ENCODE measurements at regions of chr15 and their contacts with region 1.

Region 1: GRCh38 chr15:29747837-29748417 is 74.3 kb downstream of the TJP1 start:
- DNase-seq: no peak
- H3K4me3 ChIP-seq: no peak overlapping the region
- H3K27ac ChIP-seq: no peak overlapping the region
- H3K4me1 ChIP-seq: no peaks in the 10 kb centered on the region
- H3K27me3 ChIP-seq: no peaks in the 10 kb centered on the region
- CTCF ChIP-seq: peak; percentile 13 to 53 (median 43)

Region 2: GRCh38 chr15:29613951-29614382 is 134.0 kb before region 1 on chr15:
- intact Hi-C with region 1: no loop called
- DNase-seq: no peak
- H3K4me3 ChIP-seq: no peak overlapping the region
- H3K27ac ChIP-seq: no peak overlapping the region
- H3K4me1 ChIP-seq: peaks cover 3 to 7% of the 10 kb centered on the region in 2 donors
- H3K27me3 ChIP-seq: no peaks in the 10 kb centered on the region
- CTCF ChIP-seq: no peak

Region 3: DNA sequence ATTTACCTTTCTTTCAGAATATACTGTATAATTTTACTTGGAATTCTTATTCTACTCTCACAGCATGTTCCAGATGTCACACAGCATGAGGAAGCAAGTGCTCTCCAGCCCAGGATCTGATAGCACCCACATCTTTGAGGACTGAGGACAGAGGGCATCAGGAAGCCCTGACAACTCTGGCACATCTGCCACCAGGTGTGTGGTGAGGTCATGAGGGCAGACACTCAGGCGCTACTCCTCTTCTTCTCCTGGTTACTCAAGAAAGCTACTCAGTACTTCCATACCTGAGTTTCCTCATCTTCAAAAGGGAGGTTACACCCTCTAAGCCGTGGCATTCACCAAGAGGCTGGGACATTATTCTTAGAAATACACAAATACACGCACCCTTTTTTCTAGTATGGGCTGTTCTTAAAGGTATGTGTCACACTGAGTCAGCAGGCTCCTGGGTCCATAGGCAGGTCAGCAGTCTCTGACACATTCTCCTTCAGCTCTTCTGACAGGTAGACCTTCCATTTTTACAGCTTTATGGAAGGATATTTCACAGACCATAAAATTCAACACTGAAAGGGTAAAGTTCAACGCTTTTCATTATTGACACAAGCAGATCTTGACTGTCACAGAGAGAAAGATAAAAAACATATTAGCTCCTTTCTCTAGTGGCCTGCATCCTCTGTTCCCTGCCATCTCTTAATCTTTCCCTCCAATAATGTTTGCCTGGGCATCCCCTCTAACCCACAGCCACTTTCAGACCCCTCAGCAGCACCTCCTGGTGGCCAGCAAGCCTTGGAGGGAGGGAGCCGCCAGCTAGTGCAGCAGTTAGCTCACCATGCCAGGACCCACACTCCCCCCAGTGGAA is 177.5 kb after region 1 on chr15:
- intact Hi-C with region 1: loop called (anchors 2 kb)
- DNase-seq: peak in 1 of 2 donors; percentile 71
- H3K4me3 ChIP-seq: no peak overlapping the region
- H3K27ac ChIP-seq: peak overlapping the region; percentile 37 to 46
- H3K4me1 ChIP-seq: peaks cover 3 to 5% of the 10 kb centered on the region in 2 donors
- H3K27me3 ChIP-seq: no peaks in the 10 kb centered on the region
- CTCF ChIP-seq: peak; percentile 55 to 63 (median 62)

Region 4: GRCh38 chr15:29942143-29942542 is 194.2 kb after region 1 on chr15:
- intact Hi-C with region 1: loop called (anchors 5 kb)
- DNase-seq: no peak
- H3K4me3 ChIP-seq: no peak overlapping the region
- H3K27ac ChIP-seq: no peak overlapping the region
- H3K4me1 ChIP-seq: no peaks in the 10 kb centered on the region
- H3K27me3 ChIP-seq: no peaks in the 10 kb centered on the region
- CTCF ChIP-seq: no peak

Region 5: DNA sequence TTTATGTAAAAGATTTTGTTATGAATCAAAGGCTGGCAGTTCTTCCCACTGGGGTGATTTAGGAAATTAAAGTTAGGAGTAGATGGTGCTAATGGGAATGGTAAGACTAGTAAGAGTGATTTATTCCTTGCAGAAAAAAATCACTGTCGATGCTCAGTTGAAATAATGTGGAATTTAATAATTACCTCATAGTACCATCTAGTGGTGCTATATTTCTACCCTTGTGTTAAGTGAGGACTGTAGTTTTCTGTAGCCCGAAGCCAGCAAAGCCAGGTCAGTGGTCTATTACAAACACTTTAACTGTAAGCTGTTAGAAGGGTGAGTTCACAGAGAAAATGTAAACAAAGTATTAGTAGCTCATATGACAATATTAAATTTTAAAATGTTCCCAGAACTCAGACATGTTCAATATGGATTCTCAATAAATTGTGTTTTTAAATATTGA is 295.3 kb after region 1 on chr15:
- intact Hi-C with region 1: loop called (anchors 5 kb)
- DNase-seq: no peak
- H3K4me3 ChIP-seq: no peak overlapping the region
- H3K27ac ChIP-seq: no peak overlapping the region
- H3K4me1 ChIP-seq: no peaks in the 10 kb centered on the region
- H3K27me3 ChIP-seq: no peaks in the 10 kb centered on the region
- CTCF ChIP-seq: peak in 2 of 3 experiments; percentile 14 to 44

Measured in ascending aorta (tissue), 2 donors.